Sigmoid colon (tissue), 7 donors: ENCODE measurements at regions of chr9 and their contacts with region 1.

Region 1: DNA sequence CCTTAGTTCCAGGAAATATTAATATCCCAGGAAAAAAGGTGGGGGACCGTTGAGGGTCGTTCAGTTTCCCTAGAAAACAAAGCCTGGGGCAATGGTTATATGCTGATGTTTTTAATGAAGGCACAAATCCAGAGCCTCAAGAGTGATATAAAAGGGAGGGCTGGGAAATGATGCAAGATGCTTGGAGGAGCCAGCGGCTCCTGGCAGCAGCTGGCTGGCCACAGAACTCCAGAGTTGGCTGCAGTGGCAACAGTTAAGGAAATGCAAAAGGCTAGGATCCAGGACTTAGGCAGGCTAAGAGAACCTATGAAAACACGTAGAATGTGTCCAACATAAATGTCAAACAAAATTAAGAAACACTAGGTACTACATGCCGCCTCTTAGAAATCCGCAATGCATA is 31.0 kb upstream of the B4GALT1 start:
- DNase-seq: peak; percentile 88
- H3K4me3 ChIP-seq: no peak overlapping the region
- H3K27ac ChIP-seq: peak overlapping the region; percentile 37 to 74 (median 66)
- H3K4me1 ChIP-seq: peaks cover 0 to 27% (median 16%) of the 10 kb centered on the region in 4 donors
- H3K27me3 ChIP-seq: no peaks in the 10 kb centered on the region
- CTCF ChIP-seq: no peak
- EP300 ChIP-seq: no peak
- POLR2A ChIP-seq: no peak

Region 2: DNA sequence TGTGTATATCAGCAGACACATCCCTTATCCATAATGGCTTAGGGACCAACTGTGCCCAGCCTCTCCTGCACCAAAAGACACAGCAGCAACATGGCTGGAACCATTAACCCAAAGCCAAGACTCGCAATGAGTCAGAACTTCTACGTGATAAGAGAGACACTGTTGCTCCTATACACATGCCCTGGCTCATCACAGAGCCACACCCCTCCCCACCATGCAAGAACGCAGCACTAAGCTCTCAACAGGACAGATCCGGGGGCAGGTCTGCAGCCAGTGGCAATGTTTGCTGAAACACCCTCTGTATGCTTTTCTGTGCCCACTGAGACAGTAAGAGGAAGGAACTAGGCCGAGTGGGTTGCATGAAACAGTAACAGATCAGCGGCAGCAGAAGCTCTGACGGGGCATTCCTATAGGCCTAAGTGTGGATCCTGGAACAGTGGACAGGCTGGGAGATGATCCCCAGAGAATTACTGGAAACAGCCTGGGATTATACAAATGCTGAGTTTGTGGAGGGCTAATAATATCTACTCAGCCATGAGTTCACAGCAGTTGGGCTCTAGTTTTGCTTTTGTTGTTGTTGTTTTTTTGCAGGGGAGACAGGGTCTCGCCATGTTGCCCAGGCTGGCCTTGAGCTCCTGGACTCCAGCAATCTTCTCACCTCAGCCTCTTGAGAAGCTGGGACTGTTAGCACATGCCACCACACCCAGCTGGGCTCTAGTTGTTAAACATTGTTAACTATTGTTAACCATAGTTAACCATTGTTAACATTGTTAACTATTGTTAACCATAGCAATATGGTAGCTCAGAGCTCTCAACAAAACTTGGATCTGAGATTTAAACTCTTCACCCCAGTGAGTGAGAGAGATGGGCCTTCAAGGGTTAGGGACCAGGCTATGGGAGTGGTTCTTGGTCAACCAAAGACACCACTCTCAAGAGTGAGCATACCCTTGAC is 72.0 kb before region 1 on chr9:
- intact Hi-C with region 1: no loop called
- DNase-seq: peak; percentile 26
- H3K4me3 ChIP-seq: no peak overlapping the region
- H3K27ac ChIP-seq: no peak overlapping the region
- H3K4me1 ChIP-seq: peaks cover 0 to 21% (median 11%) of the 10 kb centered on the region in 4 donors
- H3K27me3 ChIP-seq: no peaks in the 10 kb centered on the region
- CTCF ChIP-seq: no peak
- EP300 ChIP-seq: no peak
- POLR2A ChIP-seq: no peak

Region 3: GRCh38 chr9:33167046-33167808 is 30.9 kb before region 1 on chr9 and contains the start of gene B4GALT1:
- intact Hi-C with region 1: loop called (anchors 1 kb)
- DNase-seq: peak; percentile 97
- H3K4me3 ChIP-seq: peak within 1 kb of the TSS; percentile 66 to 98 (median 88)
- H3K27ac ChIP-seq: peak within 1 kb of the TSS; percentile 83 to 98 (median 92)
- H3K4me1 ChIP-seq: peaks cover 0 to 49% (median 45%) of the 10 kb centered on the region in 4 donors
- H3K27me3 ChIP-seq: no peaks in the 10 kb centered on the region
- CTCF ChIP-seq: no peak
- EP300 ChIP-seq: no peak
- POLR2A ChIP-seq: peak; percentile 65 to 74
- total RNA-seq, gene B4GALT1: 20.3 to 28.0 (median 25.0) TPM

Region 4: GRCh38 chr9:33225319-33226149 is 27.4 kb after region 1 on chr9:
- intact Hi-C with region 1: loop called (anchors 2 kb)
- DNase-seq: no peak
- H3K4me3 ChIP-seq: no peak overlapping the region
- H3K27ac ChIP-seq: no peak overlapping the region
- H3K4me1 ChIP-seq: peaks cover 0 to 8% (median 5%) of the 10 kb centered on the region in 4 donors
- H3K27me3 ChIP-seq: no peaks in the 10 kb centered on the region
- CTCF ChIP-seq: peak; percentile 68 to 89 (median 77)
- EP300 ChIP-seq: no peak
- POLR2A ChIP-seq: no peak